Colonic mucosa (tissue), 4 donors: ENCODE measurements at regions of chr19 and their contacts with region 1.

Region 1: GRCh38 chr19:6297202-6297601 is 17.4 kb upstream of the MLLT1 start:
- DNase-seq: no peak
- H3K4me3 ChIP-seq: no peak overlapping the region
- H3K27ac ChIP-seq: no peak overlapping the region
- H3K4me1 ChIP-seq: no peaks in the 10 kb centered on the region
- H3K27me3 ChIP-seq: no peaks in the 10 kb centered on the region
- CTCF ChIP-seq: no peak

Region 2: DNA sequence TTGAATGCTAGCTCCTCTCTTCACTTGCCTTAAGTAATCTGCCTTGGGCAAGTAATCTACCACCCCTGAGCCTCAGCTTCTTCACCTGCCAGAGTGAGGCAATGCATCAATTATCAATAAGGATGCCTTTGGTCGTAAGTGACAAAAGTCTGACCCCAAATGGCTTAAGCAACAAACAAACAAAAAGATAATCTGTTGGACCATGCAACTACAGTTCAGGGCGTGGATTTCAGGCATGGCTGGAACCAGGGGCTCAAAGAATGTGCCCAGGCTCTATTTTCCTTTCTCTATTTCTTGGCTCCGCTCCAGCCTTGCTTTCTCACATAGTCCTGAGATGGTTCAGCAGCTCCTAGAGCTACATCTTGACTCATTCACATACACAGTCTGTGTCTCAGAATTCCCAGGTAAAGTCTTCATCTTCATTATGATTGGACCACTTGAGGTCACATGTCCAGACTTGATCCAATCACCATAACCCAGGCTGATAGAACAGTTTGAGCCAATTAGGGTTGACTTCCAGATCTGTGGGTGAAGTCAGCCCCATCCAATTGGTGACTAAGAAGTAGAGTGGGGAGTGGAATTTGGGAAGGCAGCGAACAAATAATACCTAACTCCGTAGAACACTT is 132.2 kb before region 1 on chr19:
- intact Hi-C with region 1: loop called (anchors 5 kb)
- DNase-seq: no peak
- H3K4me3 ChIP-seq: no peak overlapping the region
- H3K27ac ChIP-seq: no peak overlapping the region
- H3K4me1 ChIP-seq: no peaks in the 10 kb centered on the region
- H3K27me3 ChIP-seq: no peaks in the 10 kb centered on the region
- CTCF ChIP-seq: no peak

Region 3: GRCh38 chr19:6218491-6219162 is 78.6 kb before region 1 on chr19:
- intact Hi-C with region 1: loop called (anchors 2 kb)
- DNase-seq: peak; percentile 93
- H3K4me3 ChIP-seq: no peak overlapping the region
- H3K27ac ChIP-seq: no peak overlapping the region
- H3K4me1 ChIP-seq: peaks cover 2% of the 10 kb centered on the region
- H3K27me3 ChIP-seq: no peaks in the 10 kb centered on the region
- CTCF ChIP-seq: peak; percentile 96